Transverse colon (tissue), 4 donors: ENCODE measurements at regions of chr1 and their contacts with region 1.

Region 1: GRCh38 chr1:22350910-22351767 is 100.5 kb upstream of the ZBTB40 start:
- DNase-seq: no peak
- H3K4me3 ChIP-seq: no peak overlapping the region
- H3K27ac ChIP-seq: no peak overlapping the region
- H3K4me1 ChIP-seq: peaks cover 0 to 11% (median 0%) of the 10 kb centered on the region in 4 donors
- H3K27me3 ChIP-seq: peaks cover 100% of the 10 kb centered on the region
- CTCF ChIP-seq: no peak
- EP300 ChIP-seq: no peak
- POLR2A ChIP-seq: no peak

Region 2: DNA sequence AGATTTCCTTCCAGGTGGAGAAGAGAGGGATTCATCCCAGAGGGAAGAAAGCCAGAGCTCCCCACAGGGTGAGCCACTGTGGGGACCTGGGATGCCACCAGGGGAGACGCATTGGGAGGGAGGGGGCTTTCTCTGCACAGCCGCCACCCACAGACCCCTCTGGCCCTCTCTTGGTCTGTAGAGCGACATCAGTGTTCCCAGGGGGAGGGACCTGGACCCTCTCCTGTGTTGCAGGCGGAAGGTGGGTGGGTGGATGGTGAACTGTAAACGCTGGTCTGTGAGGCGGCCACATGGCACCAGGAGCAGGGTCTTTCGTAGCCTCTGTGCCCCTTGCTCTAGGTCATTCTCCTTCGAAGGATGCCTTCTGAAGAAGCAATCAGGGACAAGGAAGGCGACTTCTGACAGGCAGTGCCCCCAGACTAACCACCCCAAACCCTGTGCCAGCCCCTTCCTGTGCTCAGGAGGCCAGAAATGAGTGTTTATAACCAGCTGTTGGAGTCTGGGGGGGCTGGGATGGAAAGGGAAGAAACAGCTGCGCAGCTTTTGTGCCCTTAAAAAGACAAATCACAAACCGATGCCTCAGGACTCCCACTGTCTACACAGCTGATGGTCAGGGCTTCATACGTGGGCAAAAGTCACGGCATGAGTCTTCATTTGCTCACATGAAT is 20.9 kb before region 1 on chr1:
- in situ Hi-C with region 1: no loop called
- intact Hi-C with region 1: loop called (anchors 1 kb)
- DNase-seq: no peak
- H3K4me3 ChIP-seq: no peak overlapping the region
- H3K27ac ChIP-seq: no peak overlapping the region
- H3K4me1 ChIP-seq: no peaks in the 10 kb centered on the region
- H3K27me3 ChIP-seq: peaks cover 4% of the 10 kb centered on the region
- CTCF ChIP-seq: no peak
- EP300 ChIP-seq: no peak
- POLR2A ChIP-seq: no peak